ENCODE measurements at regions of chr18 and their contacts with region 1.

Region 1: GRCh38 chr18:10437837-10438236 is 16.6 kb upstream of the APCDD1 start:
- DNase-seq: no peak
- H3K4me3 ChIP-seq: no peak overlapping the region
- H3K27me3 ChIP-seq: peaks cover 2% of the 10 kb centered on the region
- CTCF ChIP-seq: peak; percentile 56

Region 2: GRCh38 chr18:10320791-10321190 is 117.0 kb before region 1 on chr18:
- CTCF ChIA-PET with region 1: no interaction called
- POLR2A ChIA-PET with region 1: no interaction called
- DNase-seq: peak; percentile 31
- H3K4me3 ChIP-seq: no peak overlapping the region
- H3K27me3 ChIP-seq: no peaks in the 10 kb centered on the region
- CTCF ChIP-seq: no peak

Region 3: DNA sequence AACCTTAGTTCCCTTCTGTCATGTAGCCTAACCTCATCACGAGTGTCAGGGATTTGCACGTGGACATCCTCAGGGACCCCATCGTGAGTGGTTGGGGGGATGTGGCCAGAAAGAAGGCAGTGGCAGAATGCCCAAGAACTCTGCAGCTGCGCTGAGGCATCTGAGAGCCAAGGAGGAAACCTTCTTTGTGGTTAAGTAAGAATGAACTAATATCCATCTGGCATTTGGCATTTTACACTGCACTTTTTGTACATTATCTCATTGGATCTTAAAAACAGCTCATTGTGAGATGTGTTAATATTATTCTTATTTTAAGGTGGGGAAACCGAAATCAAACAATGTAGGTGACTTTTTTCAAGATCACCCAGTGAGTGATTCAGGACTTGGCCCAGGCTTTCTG is 16.0 kb before region 1 on chr18:
- CTCF ChIA-PET with region 1: interaction called, 11 read pairs
- POLR2A ChIA-PET with region 1: no interaction called
- DNase-seq: no peak
- H3K4me3 ChIP-seq: no peak overlapping the region
- H3K27me3 ChIP-seq: peaks cover 4% of the 10 kb centered on the region
- CTCF ChIP-seq: no peak

Region 4: GRCh38 chr18:10449396-10449795 is 11.6 kb after region 1 on chr18:
- CTCF ChIA-PET with region 1: interaction called, 10 read pairs
- POLR2A ChIA-PET with region 1: no interaction called
- DNase-seq: peak; percentile 9
- H3K4me3 ChIP-seq: no peak overlapping the region
- H3K27me3 ChIP-seq: peaks cover 3% of the 10 kb centered on the region
- CTCF ChIP-seq: no peak